K562 (cell line): ENCODE measurements at regions of chr7 and their contacts with region 1.

Region 1: DNA sequence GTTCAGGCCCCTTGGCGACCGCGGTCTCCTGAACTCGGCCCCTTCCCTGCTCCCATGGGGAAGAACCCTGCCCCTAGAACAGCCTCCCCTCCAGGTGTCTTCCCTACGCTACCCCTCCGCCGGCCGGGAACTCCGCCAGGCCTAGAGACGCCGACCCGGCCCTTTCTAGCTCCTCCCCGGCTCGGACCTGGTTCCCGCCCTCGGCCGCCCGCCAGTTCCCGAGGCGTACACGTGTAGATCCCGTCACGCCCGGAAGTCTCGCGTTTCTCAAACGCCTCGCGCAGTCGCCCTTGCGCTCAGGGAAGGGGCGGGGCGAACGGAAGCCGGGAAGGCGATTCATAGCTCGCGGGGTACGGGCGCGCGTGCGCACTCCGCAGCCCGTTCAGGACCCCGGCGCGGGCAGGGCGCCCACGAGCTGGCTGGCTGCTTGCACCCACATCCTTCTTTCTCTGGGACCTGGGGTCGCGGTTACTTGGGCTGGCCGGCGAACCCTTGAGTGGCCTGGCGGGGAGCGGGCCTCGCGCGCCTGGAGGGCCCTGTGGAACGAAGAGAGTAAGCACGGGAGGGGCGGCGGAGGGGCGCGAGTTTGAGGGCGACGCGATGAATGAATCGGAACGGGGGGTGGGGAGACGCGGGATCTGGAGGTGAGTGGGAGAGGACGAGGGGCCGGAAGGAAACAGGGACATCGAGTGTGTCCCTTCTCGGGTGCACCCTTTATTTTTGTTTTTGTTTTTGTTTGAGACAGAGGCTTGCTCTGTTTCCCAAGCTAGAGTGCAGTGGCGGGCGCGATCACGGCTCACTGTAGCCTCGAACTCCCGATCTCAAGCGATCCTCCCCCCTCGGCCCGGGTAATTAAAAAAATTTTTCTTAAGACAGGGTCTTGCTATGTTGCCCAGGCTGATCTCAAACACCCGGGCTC is at the start of gene POP7:
- DNase-seq: peak; percentile 96 to 100 (median 98)
- ATAC-seq: peak; percentile 97
- H3K4me3 ChIP-seq: peak within 1 kb of the TSS; percentile 66
- H3K27ac ChIP-seq: peak within 1 kb of the TSS; percentile 83
- H3K4me1 ChIP-seq: peaks cover 6 to 27% of the 10 kb centered on the region in 2 experiments; a peak in 4 of 5 replicates
- H3K27me3 ChIP-seq: 0 out of 5 replicates have a peak, but pooled peaks cover 3 to 4% of the 10 kb centered on the region in 2 experiments
- CTCF ChIP-seq: no peak; a peak in 1 of 6 replicates
- EP300 ChIP-seq: 0 out of 2 replicates have a peak, but pooled peaks have one; percentile 31
- POLR2A ChIP-seq: peak; percentile 96
- RAD21 ChIP-seq: no peak
- polyA plus RNA-seq, gene POP7: 11.5 to 27.1 TPM

Region 2: DNA sequence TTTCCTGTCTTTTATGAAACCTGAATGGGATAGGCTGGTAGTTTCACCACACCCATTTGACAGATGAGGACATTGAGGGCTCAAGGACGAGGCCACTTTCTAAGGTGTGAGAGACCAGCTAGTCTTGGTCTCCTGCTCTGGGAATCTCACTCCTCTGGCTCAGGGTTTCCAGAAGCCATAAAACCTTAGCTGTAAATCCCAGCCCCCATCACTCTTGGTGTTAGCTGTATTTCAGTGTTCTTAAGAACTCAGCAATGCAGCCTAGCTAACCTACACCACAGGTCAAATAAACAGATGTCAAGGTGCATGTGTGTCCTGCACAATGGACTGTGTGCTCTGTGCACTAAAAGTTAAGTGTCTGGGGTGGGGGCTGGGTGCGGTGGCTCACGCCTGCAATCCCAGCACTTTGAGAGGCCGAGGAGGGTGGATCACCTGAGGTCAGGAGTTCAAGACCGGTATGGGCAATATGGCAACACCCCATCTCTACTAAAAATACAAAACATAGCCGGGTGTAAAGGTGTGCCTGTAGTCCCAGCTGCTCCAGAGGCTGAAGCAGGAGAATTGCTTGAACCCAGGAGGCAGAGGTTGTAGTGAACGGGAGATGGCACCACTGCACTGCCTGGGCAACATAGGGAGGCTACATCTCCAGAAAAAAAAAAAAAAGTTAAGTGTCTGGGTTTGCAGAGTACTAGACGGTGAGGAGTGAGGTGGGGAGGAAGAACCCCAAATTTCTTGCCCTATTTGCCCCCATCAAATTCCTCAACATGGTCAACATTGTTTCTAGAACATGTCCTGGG is 13.7 kb after region 1 on chr7:
- CTCF ChIA-PET with region 1: interaction called, 16 read pairs
- POLR2A ChIA-PET with region 1: interaction called, 11 read pairs
- in situ Hi-C with region 1: no loop called
- intact Hi-C with region 1: no loop called
- DNase-seq: no peak
- ATAC-seq: no peak
- H3K4me3 ChIP-seq: no peak overlapping the region
- H3K27ac ChIP-seq: no peak overlapping the region
- H3K4me1 ChIP-seq: peaks cover 6 to 26% of the 10 kb centered on the region in 2 experiments; a peak in 3 of 5 replicates
- H3K27me3 ChIP-seq: peaks cover 10 to 25% of the 10 kb centered on the region in 2 experiments
- CTCF ChIP-seq: no peak
- EP300 ChIP-seq: no peak
- POLR2A ChIP-seq: no peak
- RAD21 ChIP-seq: no peak

Region 3: GRCh38 chr7:100726996-100727761 is 21.2 kb after region 1 on chr7:
- CTCF ChIA-PET with region 1: interaction called, 16 read pairs
- POLR2A ChIA-PET with region 1: interaction called, 8 read pairs
- in situ Hi-C with region 1: no loop called
- intact Hi-C with region 1: loop called (anchors 1 kb)
- DNase-seq: no peak
- ATAC-seq: no peak
- H3K4me3 ChIP-seq: no peak overlapping the region
- H3K27ac ChIP-seq: no peak overlapping the region
- H3K4me1 ChIP-seq: peaks cover 0 to 13% of the 10 kb centered on the region in 2 experiments; a peak in 3 of 5 replicates
- H3K27me3 ChIP-seq: peaks cover 6 to 21% of the 10 kb centered on the region in 2 experiments; a peak in 3 of 5 replicates
- CTCF ChIP-seq: no peak
- EP300 ChIP-seq: no peak
- POLR2A ChIP-seq: no peak
- RAD21 ChIP-seq: no peak

Region 4: DNA sequence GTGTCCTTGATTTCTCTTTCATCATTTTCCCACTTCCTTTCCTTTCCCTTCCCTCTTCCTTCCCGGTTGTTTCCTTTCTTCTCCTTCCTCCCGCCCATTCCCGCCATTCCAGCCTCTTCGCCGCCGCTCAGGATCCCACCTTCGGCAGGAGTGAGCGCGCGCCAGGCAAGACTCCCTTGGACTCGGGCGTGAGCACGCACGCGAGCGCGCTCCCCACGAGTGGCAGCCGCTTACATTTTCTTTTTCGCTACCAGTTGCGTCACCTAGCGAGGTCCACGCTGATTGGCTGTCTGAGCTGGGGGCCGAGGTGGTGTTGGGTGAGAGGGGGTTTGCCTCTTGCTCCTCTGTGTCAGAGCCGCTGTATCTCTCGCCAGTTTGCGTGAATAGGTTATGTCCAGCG is 39.2 kb after region 1 on chr7:
- CTCF ChIA-PET with region 1: no interaction called
- POLR2A ChIA-PET with region 1: no interaction called
- in situ Hi-C with region 1: no loop called
- intact Hi-C with region 1: no loop called
- DNase-seq: peak; percentile 61 to 80 (median 74)
- ATAC-seq: peak; percentile 94
- H3K4me3 ChIP-seq: peak overlapping the region; percentile 34
- H3K27ac ChIP-seq: no peak overlapping the region; the same call in 2 of the 3 replicates
- H3K4me1 ChIP-seq: peaks cover 2 to 6% of the 10 kb centered on the region in 2 experiments; a peak in 2 of 5 replicates
- H3K27me3 ChIP-seq: peaks cover 7 to 24% of the 10 kb centered on the region in 2 experiments; a peak in 3 of 5 replicates
- CTCF ChIP-seq: no peak
- EP300 ChIP-seq: no peak
- POLR2A ChIP-seq: peak; percentile 50; the same call in 1 of the 2 replicates
- RAD21 ChIP-seq: no peak

Region 5: DNA sequence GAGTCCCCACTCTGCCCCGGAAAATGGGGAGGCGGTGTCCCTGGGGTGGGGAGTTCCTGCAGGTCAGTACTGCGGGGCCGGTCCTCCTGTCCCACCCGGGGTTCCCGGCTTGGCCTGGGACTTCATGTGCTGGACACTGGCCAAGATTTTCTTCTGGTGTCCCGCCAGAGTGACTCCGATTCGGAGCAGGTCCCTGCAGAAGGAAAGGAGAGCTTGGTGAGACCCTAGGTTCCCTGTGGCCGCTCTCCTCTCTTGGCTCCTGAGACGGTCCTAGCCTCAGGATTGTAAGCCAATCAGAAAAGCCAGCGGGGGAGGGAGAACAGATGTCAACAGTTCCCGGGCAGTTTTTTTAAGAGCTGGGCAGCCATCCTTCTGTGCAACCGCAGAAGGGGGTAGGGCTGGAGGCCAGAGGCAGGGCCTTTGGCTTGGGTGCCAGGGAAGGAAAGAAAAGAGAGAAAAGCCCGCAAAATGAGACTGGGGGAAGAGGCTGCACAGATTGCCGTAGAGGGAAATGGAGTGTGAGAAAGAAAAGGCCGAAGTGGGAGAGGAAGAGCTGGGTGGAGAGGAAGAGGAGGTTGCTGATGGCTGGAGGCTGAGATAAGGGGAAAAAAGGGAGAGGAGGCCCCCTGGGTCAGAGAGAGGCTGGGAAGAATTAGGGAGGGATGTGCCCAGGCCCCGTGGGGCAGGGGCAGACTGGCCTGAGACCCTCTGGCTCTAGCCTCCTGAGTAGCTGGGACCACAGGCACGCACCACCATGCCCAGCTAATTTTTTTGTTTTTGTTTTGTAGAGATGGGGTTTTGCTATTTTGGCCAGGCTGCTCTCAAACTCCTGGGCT is 97.6 kb after region 1 on chr7:
- CTCF ChIA-PET with region 1: no interaction called
- POLR2A ChIA-PET with region 1: no interaction called
- in situ Hi-C with region 1: no loop called
- intact Hi-C with region 1: loop called (anchors 5 kb)
- DNase-seq: peak; percentile 80 to 86 (median 84)
- ATAC-seq: peak; percentile 68
- H3K4me3 ChIP-seq: no peak overlapping the region
- H3K27ac ChIP-seq: peak overlapping the region; percentile 39; the same call in 1 of the 3 replicates
- H3K4me1 ChIP-seq: peaks cover 46 to 66% of the 10 kb centered on the region in 2 experiments
- H3K27me3 ChIP-seq: no peaks in the 10 kb centered on the region
- CTCF ChIP-seq: no peak
- EP300 ChIP-seq: peak; percentile 16; the same call in 1 of the 2 replicates
- POLR2A ChIP-seq: 0 out of 2 replicates have a peak, but pooled peaks have one; percentile 27
- RAD21 ChIP-seq: no peak